MCF 10A (cell line): ENCODE measurements at regions of chr5 and their contacts with region 1.

Region 1: DNA sequence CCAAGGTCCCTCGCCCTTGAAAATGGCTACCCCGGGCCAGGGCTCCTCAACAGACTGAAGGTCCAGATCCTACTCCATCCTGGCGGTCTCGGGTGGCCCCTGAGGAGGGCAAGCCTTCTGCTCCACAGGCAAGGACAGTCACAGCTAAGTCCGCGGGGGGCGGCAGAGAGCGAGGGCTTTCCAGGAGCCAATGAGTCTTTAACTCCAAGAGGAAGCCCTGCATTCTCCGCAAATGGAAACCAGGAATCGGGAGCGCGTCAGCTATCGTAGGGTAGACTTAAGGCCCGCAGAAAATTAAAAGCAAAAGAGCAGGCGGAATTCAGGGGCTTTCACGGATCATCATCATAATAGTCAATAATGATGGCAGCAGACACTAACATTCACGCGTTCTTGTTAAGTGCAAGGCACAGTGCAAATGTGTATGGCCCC is 87.8 kb upstream of the TNFAIP8 start:
- DNase-seq: peak; percentile 99
- H3K4me3 Mint-ChIP-seq: peak overlapping the region; percentile 86
- H3K27ac Mint-ChIP-seq: peak overlapping the region; percentile 81
- H3K4me1 Mint-ChIP-seq: peaks cover 17% of the 10 kb centered on the region
- H3K27me3 Mint-ChIP-seq: no peaks in the 10 kb centered on the region
- CTCF ChIP-seq: peak; percentile 55

Region 2: DNA sequence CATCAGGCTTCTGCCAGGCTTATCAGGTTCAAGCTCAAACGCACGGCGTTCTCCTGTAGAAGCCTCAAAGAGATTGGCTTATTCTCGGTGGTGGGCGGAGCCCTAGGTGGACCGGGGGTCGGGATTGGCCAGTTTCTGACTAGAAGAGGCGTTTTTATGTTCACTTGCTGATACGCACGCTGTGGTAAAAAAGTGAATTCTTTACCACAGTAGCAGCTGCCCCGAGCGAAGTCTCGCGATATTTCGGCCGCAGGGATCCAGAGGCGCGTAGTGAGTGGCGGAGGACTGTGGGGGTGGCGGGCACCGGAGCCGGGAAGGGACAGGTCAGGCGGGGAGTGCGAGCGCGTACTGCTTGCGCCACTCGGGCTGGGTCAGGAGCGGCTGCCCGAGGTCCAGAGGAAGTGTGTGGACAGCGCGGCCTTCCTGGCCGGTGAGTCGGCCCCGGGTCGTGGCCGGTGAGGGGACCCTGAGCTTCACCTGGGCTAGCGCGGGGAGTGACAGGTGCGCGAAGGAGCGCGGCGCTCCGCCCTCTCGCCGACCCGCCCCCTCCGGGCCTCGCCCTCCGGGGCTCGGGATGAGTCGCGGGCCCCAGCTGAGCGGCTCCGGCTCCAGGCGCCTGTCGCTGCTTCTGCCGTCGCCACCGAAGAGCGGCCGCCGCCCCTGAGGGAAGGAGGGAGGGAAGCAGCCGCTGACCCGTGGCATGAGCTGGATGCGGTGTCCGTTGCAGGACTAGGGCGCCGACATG is 197.0 kb before region 1 on chr5 and contains the start of gene DMXL1:
- CTCF ChIA-PET with region 1: interaction called, 3 read pairs
- POLR2A ChIA-PET with region 1: interaction called, 17 read pairs
- intact Hi-C with region 1: loop called (anchors 1 kb)
- DNase-seq: peak; percentile 100
- H3K4me3 Mint-ChIP-seq: peak within 1 kb of the TSS; percentile 77
- H3K27ac Mint-ChIP-seq: peak within 1 kb of the TSS; percentile 79
- H3K4me1 Mint-ChIP-seq: peaks cover 24% of the 10 kb centered on the region
- H3K27me3 Mint-ChIP-seq: no peaks in the 10 kb centered on the region
- CTCF ChIP-seq: no peak
- total RNA-seq, gene DMXL1: 38.1 and 45.1 TPM in 2 replicates

Region 3: GRCh38 chr5:119302916-119303897 is 35.2 kb after region 1 on chr5:
- CTCF ChIA-PET with region 1: no interaction called
- POLR2A ChIA-PET with region 1: interaction called, 20 read pairs
- intact Hi-C with region 1: loop called (anchors 2 kb)
- DNase-seq: peak; percentile 94
- H3K4me3 Mint-ChIP-seq: peak overlapping the region; percentile 52
- H3K27ac Mint-ChIP-seq: peak overlapping the region; percentile 91
- H3K4me1 Mint-ChIP-seq: peaks cover 33% of the 10 kb centered on the region
- H3K27me3 Mint-ChIP-seq: no peaks in the 10 kb centered on the region
- CTCF ChIP-seq: no peak

Region 4: GRCh38 chr5:119335261-119335677 is 67.3 kb after region 1 on chr5:
- CTCF ChIA-PET with region 1: interaction called, 100 read pairs
- POLR2A ChIA-PET with region 1: interaction called, 117 read pairs
- intact Hi-C with region 1: loop called (anchors 1 kb)
- DNase-seq: no peak
- H3K4me3 Mint-ChIP-seq: peak overlapping the region; percentile 72
- H3K27ac Mint-ChIP-seq: peak overlapping the region; percentile 76
- H3K4me1 Mint-ChIP-seq: peaks cover 45% of the 10 kb centered on the region
- H3K27me3 Mint-ChIP-seq: no peaks in the 10 kb centered on the region
- CTCF ChIP-seq: no peak

Region 5: GRCh38 chr5:119397518-119398380 is 129.8 kb after region 1 on chr5:
- CTCF ChIA-PET with region 1: interaction called, 7 read pairs
- POLR2A ChIA-PET with region 1: interaction called, 22 read pairs
- intact Hi-C with region 1: no loop called
- DNase-seq: peak; percentile 87
- H3K4me3 Mint-ChIP-seq: peak overlapping the region; percentile 63
- H3K27ac Mint-ChIP-seq: peak overlapping the region; percentile 94
- H3K4me1 Mint-ChIP-seq: peaks cover 48% of the 10 kb centered on the region
- H3K27me3 Mint-ChIP-seq: no peaks in the 10 kb centered on the region
- CTCF ChIP-seq: no peak